ENCODE measurements at regions of chr1 and their contacts with region 1.

Region 1: DNA sequence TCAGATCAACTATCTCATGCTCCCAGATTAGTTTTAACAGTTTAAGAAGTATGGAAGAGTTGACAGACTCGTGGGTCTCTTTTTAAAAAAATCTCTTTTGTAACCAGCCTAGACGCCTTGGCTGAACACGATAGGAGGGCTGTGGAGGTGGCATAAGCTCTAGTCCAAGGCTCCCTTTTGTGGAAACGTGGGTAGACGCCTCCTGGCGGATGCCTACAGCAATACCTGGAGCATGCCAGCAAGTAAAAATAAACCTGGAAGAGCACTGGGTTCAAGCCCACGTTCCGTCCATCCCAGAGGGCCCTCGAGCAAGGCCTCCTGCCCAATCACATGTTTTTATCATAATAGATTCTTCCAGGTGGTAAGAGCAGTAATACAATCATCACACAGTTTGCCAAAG is 87.9 kb downstream of the RGS7 start:
- H3K4me3 ChIP-seq: no peak overlapping the region
- H3K27ac ChIP-seq: no peak overlapping the region
- H3K4me1 ChIP-seq: no peaks in the 10 kb centered on the region
- CTCF ChIP-seq: no peak

Region 2: GRCh38 chr1:240967070-240967724 is 301.9 kb before region 1 on chr1:
- CTCF ChIA-PET with region 1: interaction called, 10 read pairs
- POLR2A ChIA-PET with region 1: no interaction called
- H3K4me3 ChIP-seq: no peak overlapping the region
- H3K27ac ChIP-seq: no peak overlapping the region
- H3K4me1 ChIP-seq: no peaks in the 10 kb centered on the region
- CTCF ChIP-seq: no peak

Region 3: GRCh38 chr1:241464985-241465384 is 195.9 kb after region 1 on chr1:
- CTCF ChIA-PET with region 1: no interaction called
- POLR2A ChIA-PET with region 1: no interaction called
- H3K4me3 ChIP-seq: no peak overlapping the region
- H3K27ac ChIP-seq: no peak overlapping the region
- H3K4me1 ChIP-seq: peaks cover 7% of the 10 kb centered on the region
- CTCF ChIP-seq: no peak

Measured in HEK293 (cell line).